ENCODE measurements at regions of chr1 and their contacts with region 1.

Region 1: GRCh38 chr1:160101037-160101716 is 2.8 kb upstream of the IGSF8 start:
- DNase-seq: peak; percentile 91
- H3K4me3 ChIP-seq: no peak overlapping the region
- H3K27ac ChIP-seq: no peak overlapping the region
- H3K4me1 ChIP-seq: peaks cover 17% of the 10 kb centered on the region
- H3K27me3 ChIP-seq: no peaks in the 10 kb centered on the region
- CTCF ChIP-seq: peak; percentile 97

Region 2: GRCh38 chr1:159970932-159971342 is 130.2 kb before region 1 on chr1:
- CTCF ChIA-PET with region 1: no interaction called
- POLR2A ChIA-PET with region 1: no interaction called
- intact Hi-C with region 1: no loop called
- DNase-seq: no peak
- H3K4me3 ChIP-seq: no peak overlapping the region
- H3K27ac ChIP-seq: no peak overlapping the region
- H3K4me1 ChIP-seq: no peaks in the 10 kb centered on the region
- H3K27me3 ChIP-seq: peaks cover 45% of the 10 kb centered on the region
- CTCF ChIP-seq: no peak

Region 3: GRCh38 chr1:160006312-160006940 is 94.8 kb before region 1 on chr1:
- CTCF ChIA-PET with region 1: no interaction called
- POLR2A ChIA-PET with region 1: no interaction called
- intact Hi-C with region 1: no loop called
- DNase-seq: peak; percentile 74
- H3K4me3 ChIP-seq: no peak overlapping the region
- H3K27ac ChIP-seq: no peak overlapping the region
- H3K4me1 ChIP-seq: no peaks in the 10 kb centered on the region
- H3K27me3 ChIP-seq: no peaks in the 10 kb centered on the region
- CTCF ChIP-seq: peak; percentile 96

Region 4: GRCh38 chr1:160193091-160193819 is 92.1 kb after region 1 on chr1:
- CTCF ChIA-PET with region 1: no interaction called
- POLR2A ChIA-PET with region 1: no interaction called
- intact Hi-C with region 1: loop called (anchors 2 kb)
- DNase-seq: peak; percentile 85
- H3K4me3 ChIP-seq: no peak overlapping the region
- H3K27ac ChIP-seq: no peak overlapping the region
- H3K4me1 ChIP-seq: no peaks in the 10 kb centered on the region
- H3K27me3 ChIP-seq: no peaks in the 10 kb centered on the region
- CTCF ChIP-seq: peak; percentile 96

Region 5: GRCh38 chr1:160219062-160219929 is 118.1 kb after region 1 on chr1:
- CTCF ChIA-PET with region 1: interaction called, 12 read pairs
- POLR2A ChIA-PET with region 1: no interaction called
- intact Hi-C with region 1: no loop called
- DNase-seq: peak; percentile 40
- H3K4me3 ChIP-seq: no peak overlapping the region
- H3K27ac ChIP-seq: no peak overlapping the region
- H3K4me1 ChIP-seq: no peaks in the 10 kb centered on the region
- H3K27me3 ChIP-seq: no peaks in the 10 kb centered on the region
- CTCF ChIP-seq: 0 out of 2 replicates have a peak, but pooled peaks have one; percentile 35

Region 6: DNA sequence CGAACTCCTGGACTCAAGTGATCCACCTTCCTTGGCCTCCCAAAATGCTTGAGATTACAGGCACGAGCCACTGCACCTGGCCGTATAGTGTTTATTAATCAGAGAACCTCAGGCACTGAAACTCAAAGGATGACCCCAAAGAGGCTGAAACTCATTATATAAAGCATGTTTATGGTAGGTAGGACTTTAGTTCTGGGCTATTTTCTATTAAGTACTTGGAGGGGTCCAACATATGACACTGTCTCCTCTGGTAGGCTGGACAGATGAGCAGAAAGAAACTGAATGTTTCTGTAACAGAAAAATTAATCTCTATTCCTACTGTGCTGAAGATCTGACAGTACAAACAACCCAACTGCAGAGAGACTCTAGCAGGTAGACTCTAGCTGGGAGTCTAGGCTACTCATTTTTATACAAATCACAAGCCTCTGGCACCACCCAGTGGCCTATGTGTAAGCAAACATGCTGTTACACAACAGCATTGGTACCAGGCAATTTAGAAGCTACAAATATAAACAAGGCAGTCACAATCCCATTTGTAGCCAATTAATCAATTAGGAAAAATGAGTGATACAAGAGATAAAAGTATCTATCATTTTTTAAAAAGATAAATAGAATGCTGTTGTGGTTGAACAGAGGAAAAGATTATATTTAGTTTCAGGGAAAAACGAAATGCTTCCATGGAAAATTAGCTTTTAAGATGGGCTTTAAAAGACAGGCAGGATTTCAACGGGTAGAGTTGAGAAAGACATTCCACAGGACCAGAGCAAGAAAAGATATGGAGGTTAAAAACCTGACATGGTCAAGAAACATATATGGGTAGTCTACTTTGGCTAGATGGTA is 150.7 kb after region 1 on chr1:
- CTCF ChIA-PET with region 1: interaction called, 25 read pairs
- POLR2A ChIA-PET with region 1: no interaction called
- intact Hi-C with region 1: loop called (anchors 1 kb)
- DNase-seq: peak; percentile 82
- H3K4me3 ChIP-seq: no peak overlapping the region
- H3K27ac ChIP-seq: no peak overlapping the region
- H3K4me1 ChIP-seq: peaks cover 7% of the 10 kb centered on the region
- H3K27me3 ChIP-seq: no peaks in the 10 kb centered on the region
- CTCF ChIP-seq: peak; percentile 84

Region 7: GRCh38 chr1:160291248-160292220 is 190.4 kb after region 1 on chr1:
- CTCF ChIA-PET with region 1: interaction called, 25 read pairs
- POLR2A ChIA-PET with region 1: no interaction called
- intact Hi-C with region 1: loop called (anchors 1 kb)
- DNase-seq: peak; percentile 75
- H3K4me3 ChIP-seq: no peak overlapping the region
- H3K27ac ChIP-seq: no peak overlapping the region
- H3K4me1 ChIP-seq: no peaks in the 10 kb centered on the region
- H3K27me3 ChIP-seq: no peaks in the 10 kb centered on the region
- CTCF ChIP-seq: peak; percentile 88

Region 8: GRCh38 chr1:160376525-160377131 is 275.5 kb after region 1 on chr1:
- CTCF ChIA-PET with region 1: interaction called, 6 read pairs
- POLR2A ChIA-PET with region 1: no interaction called
- intact Hi-C with region 1: loop called (anchors 1 kb)
- DNase-seq: peak; percentile 84
- H3K4me3 ChIP-seq: no peak overlapping the region
- H3K27ac ChIP-seq: no peak overlapping the region
- H3K4me1 ChIP-seq: peaks cover 20% of the 10 kb centered on the region
- H3K27me3 ChIP-seq: no peaks in the 10 kb centered on the region
- CTCF ChIP-seq: peak; percentile 92

Measured in A673 (cell line).